Aorta (tissue), 5 donors: ENCODE measurements at regions of chr9 and their contacts with region 1.

Region 1: DNA sequence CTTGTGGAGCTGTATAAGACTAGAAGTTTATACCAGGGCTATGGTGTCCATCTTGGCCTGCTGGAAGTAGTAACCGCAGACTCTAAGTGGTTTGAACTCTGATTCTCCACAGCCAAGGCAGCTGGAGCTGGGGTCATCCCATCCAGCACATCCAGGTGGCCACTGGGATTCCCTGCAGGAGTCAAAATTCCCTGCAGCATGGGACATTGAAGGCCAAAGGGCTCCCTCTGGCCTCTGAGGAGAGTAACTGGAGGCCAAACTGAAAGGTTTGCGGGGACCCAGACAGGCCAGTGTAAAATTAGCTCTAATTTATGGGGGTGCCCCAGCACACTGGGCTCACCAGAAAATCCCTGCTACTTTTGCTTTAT is 12.2 kb upstream of the PRXL2C start:
- DNase-seq: no peak
- ATAC-seq: no peak
- H3K4me3 ChIP-seq: no peak overlapping the region
- H3K27ac ChIP-seq: no peak overlapping the region
- H3K4me1 ChIP-seq: no peaks in the 10 kb centered on the region
- H3K27me3 ChIP-seq: no peaks in the 10 kb centered on the region

Region 2: DNA sequence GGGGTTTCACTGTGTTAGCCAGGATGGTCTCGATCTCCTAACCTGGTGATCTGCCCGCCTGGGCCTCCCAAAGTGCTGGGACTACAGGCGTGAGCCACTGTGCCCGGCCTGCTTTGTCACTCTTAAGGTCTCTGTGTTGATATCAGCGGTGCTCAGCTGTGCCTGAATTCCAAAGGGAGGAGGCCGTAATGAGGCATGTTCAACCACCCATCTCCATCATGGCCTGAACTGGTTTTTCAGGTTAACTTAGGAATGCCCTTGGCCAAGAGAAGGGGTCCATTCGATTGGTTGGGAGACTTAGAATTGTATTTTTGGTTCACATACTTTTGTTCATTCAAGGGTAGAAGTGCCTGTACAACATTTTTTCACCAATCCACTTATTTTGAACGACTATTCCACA is 387.4 kb before region 1 on chr9:
- intact Hi-C with region 1: no loop called
- DNase-seq: no peak
- ATAC-seq: no peak
- H3K4me3 ChIP-seq: no peak overlapping the region
- H3K27ac ChIP-seq: no peak overlapping the region
- H3K4me1 ChIP-seq: no peaks in the 10 kb centered on the region
- H3K27me3 ChIP-seq: no peaks in the 10 kb centered on the region

Region 3: DNA sequence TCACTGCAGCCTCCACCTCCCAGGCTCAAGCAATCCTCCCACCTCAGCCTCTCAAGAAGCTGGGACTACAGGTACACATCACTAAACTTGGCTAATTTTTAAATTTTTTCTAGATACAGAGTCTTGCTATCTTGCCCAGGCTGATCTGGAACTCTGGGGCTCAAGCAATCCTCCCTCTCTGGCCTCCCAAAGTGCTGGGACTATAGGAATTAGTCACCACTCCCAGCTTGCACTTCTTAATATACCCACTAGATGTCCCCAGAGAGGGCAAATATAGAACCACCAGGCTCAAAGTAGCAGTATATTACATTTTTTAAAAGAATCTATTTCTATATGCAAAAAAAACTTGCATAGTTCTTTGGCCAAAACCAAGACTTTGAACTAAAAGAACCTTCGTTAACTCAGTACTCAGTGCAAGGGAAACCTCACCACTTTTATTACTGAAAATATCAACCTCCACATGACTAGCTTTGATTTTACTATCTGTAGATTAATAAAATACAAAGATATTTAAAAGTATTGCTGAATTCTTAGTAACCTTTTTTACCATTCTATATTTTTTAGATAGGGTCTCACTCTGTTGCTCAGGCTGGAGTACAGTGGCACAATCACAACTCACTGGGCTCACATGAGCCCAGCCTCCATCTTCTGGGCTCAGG is 339.5 kb before region 1 on chr9:
- intact Hi-C with region 1: loop called (anchors 5 kb)
- DNase-seq: no peak
- ATAC-seq: peak; percentile 86
- H3K4me3 ChIP-seq: no peak overlapping the region
- H3K27ac ChIP-seq: no peak overlapping the region
- H3K4me1 ChIP-seq: no peaks in the 10 kb centered on the region
- H3K27me3 ChIP-seq: no peaks in the 10 kb centered on the region